Mucosa of descending colon (tissue), 3 donors: ENCODE measurements at regions of chr11 and their contacts with region 1.

Region 1: DNA sequence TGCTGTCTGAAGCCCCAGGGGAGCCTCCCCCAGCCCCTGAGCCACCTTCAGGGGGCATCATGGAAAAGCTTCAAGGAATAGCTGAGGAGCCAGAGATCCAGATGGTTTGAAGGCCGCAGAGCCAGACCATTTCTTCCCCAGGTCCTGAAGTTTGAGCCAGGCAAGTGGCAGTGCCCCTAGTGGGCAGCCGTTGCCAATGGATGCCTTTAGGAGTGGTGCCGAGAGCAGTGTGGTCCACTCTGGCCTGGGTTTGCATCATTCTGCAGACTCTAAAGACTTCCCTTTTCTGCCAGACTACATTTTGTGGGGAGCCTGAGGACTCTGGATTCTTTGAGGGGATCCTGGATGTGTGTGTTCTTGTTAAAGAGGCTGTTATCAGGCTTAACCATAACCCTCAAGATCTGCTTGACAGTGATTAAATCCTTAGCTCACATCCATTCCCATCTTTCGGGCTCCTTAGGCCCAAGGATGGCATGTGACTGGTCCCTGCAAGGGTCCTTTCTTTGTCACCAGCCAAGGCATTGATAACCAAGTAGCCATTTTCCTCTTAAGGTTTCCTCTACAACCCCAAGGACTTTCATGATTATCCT is 13.1 kb downstream of the HINFP start:
- DNase-seq: peak in 1 of 3 donors; percentile 31
- ATAC-seq: peak; percentile 79
- H3K4me3 ChIP-seq: no peak overlapping the region
- H3K4me1 ChIP-seq: no peaks in the 10 kb centered on the region
- CTCF ChIP-seq: peak; percentile 18

Region 2: DNA sequence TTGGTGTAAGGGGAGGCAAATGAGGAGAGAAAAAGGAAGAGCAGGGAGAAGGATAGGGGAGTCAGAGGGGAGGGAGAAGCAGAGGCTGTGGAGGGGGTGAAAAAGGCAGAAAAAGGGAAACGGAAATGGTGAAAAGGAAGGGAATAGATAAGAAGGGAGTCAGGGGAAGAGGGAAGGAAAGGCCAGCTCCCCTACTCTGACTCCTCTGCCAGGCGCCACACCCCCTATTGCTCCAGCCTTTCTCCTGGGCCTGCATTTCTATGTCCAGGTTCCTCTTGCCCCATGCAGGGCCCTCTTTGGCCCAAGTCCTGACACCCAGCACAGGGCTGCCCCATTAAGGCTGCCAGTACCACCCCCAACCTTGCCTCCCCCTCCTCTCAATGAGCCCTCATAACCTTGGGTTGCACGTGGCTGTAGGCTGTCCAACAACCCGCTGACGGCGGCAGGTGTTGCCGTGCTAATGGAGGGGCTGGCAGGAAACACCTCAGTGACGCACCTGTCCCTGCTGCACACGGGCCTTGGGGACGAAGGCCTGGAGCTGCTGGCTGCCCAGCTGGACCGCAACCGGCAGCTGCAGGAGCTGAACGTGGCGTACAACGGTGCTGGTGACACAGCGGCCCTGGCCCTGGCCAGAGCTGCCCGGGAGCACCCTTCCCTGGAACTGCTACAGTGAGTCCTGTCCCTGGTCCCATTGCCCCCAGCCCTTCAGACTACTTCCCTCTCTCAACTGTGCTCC is 47.4 kb after region 1 on chr11:
- intact Hi-C with region 1: loop called in 1 of 2 experiments (anchors 10 kb)
- DNase-seq: no peak
- ATAC-seq: no peak
- H3K4me3 ChIP-seq: no peak overlapping the region
- H3K4me1 ChIP-seq: peaks cover 4% of the 10 kb centered on the region
- CTCF ChIP-seq: no peak